Activated T-helper 2 cell treated with anti-CD3 and anti-CD28 coated beads, Interferon-gamma antibody, Interleukin-2, Interleukin-4, amounts not matched to agents 10 μg/mL and 5 μg/mL and 100 μg/mL, durations not matched to agents 14 hours and 24 hours and 36 hours (primary cell): ENCODE measurements at regions of chr5 and their contacts with region 1.

Region 1: DNA sequence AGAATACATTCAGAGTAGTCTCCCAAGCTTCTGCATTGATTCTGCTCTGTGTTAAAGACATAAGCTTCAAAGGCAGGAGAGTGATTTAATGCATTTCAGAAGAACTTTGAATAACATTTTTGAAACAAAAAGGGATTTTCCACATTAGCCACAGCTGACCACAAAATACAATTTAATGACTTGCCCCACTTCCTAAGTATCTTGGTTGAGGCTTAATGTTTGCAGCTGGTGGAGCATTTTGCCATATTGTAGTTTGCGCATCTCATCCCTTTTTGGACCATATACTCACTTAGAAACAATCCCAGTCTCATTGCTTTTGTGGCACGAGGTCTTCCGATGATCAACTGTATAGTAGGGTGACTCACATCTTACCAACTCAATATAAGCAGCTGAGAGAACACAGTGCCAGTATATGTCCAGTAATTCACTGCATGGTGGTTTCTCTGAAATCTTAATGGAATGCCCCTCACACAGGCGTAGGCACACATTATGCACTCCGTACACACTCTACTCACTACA is 455.8 kb upstream of the PTGER4 start:
- DNase-seq: peak; percentile 43
- H3K4me3 Mint-ChIP-seq: peak overlapping the region; percentile 54
- H3K27ac Mint-ChIP-seq: peak overlapping the region; percentile 94
- H3K4me1 Mint-ChIP-seq: peaks cover 51% of the 10 kb centered on the region
- H3K27me3 Mint-ChIP-seq: no peaks in the 10 kb centered on the region

Region 2: GRCh38 chr5:39948867-39949468 is 275.0 kb before region 1 on chr5:
- intact Hi-C with region 1: loop called (anchors 10 kb)
- DNase-seq: peak; percentile 33
- H3K4me3 Mint-ChIP-seq: no peak overlapping the region
- H3K27ac Mint-ChIP-seq: no peak overlapping the region
- H3K4me1 Mint-ChIP-seq: peaks cover 3% of the 10 kb centered on the region
- H3K27me3 Mint-ChIP-seq: no peaks in the 10 kb centered on the region

Region 3: GRCh38 chr5:40307920-40308319 is 84.0 kb after region 1 on chr5:
- intact Hi-C with region 1: loop called (anchors 1 kb)
- DNase-seq: no peak
- H3K4me3 Mint-ChIP-seq: no peak overlapping the region
- H3K27ac Mint-ChIP-seq: no peak overlapping the region
- H3K4me1 Mint-ChIP-seq: peaks cover 19% of the 10 kb centered on the region
- H3K27me3 Mint-ChIP-seq: no peaks in the 10 kb centered on the region

Region 4: GRCh38 chr5:40410231-40410861 is 186.4 kb after region 1 on chr5:
- intact Hi-C with region 1: loop called (anchors 1 kb)
- DNase-seq: peak; percentile 65
- H3K4me3 Mint-ChIP-seq: peak overlapping the region; percentile 66
- H3K27ac Mint-ChIP-seq: peak overlapping the region; percentile 90
- H3K4me1 Mint-ChIP-seq: peaks cover 58% of the 10 kb centered on the region
- H3K27me3 Mint-ChIP-seq: no peaks in the 10 kb centered on the region

Region 5: GRCh38 chr5:40578501-40579451 is 354.8 kb after region 1 on chr5:
- intact Hi-C with region 1: loop called (anchors 2 kb)
- DNase-seq: peak; percentile 19
- H3K4me3 Mint-ChIP-seq: peak overlapping the region; percentile 59
- H3K27ac Mint-ChIP-seq: peak overlapping the region; percentile 87
- H3K4me1 Mint-ChIP-seq: peaks cover 36% of the 10 kb centered on the region
- H3K27me3 Mint-ChIP-seq: no peaks in the 10 kb centered on the region

Region 6: GRCh38 chr5:40736103-40736875 is 512.3 kb after region 1 on chr5:
- intact Hi-C with region 1: loop called (anchors 2 kb)
- DNase-seq: no peak
- H3K4me3 Mint-ChIP-seq: no peak overlapping the region
- H3K27ac Mint-ChIP-seq: peak overlapping the region; percentile 17
- H3K4me1 Mint-ChIP-seq: peaks cover 28% of the 10 kb centered on the region
- H3K27me3 Mint-ChIP-seq: no peaks in the 10 kb centered on the region